ENCODE measurements at regions of chr19 and their contacts with region 1.

Region 1: GRCh38 chr19:54576411-54576976 is 2.9 kb downstream of the LILRA2 start:
- DNase-seq: no peak
- CTCF ChIP-seq: no peak

Region 2: DNA sequence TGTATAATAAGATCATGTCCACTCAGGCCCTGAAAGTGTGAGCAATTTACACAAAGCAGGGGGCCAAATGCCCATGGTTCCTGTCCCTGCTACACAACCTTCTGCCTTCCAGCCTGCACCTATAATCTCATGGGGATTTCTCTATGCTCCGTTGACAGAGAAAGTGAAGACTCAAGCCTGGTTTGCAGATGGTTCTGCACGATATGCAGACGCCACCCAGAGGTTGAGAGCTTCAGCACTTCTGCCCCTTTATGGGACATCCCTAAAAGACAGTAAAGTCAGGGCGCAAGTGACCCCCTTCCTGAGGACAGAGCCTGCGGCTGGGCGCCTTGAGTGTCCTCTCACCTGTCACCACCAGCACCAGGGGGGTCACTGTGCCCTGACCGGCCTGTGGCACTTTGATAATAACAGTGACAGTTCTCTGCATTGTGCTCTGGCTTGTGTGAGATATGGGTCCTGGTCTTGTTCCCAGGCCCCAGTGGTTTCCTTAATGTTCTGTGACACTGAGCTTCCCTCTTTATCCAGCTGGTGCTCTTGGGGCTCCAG is 278.7 kb before region 1 on chr19:
- in situ Hi-C with region 1: loop called (anchors 5 kb)
- DNase-seq: peak; percentile 52
- CTCF ChIP-seq: peak; percentile 26

Region 3: DNA sequence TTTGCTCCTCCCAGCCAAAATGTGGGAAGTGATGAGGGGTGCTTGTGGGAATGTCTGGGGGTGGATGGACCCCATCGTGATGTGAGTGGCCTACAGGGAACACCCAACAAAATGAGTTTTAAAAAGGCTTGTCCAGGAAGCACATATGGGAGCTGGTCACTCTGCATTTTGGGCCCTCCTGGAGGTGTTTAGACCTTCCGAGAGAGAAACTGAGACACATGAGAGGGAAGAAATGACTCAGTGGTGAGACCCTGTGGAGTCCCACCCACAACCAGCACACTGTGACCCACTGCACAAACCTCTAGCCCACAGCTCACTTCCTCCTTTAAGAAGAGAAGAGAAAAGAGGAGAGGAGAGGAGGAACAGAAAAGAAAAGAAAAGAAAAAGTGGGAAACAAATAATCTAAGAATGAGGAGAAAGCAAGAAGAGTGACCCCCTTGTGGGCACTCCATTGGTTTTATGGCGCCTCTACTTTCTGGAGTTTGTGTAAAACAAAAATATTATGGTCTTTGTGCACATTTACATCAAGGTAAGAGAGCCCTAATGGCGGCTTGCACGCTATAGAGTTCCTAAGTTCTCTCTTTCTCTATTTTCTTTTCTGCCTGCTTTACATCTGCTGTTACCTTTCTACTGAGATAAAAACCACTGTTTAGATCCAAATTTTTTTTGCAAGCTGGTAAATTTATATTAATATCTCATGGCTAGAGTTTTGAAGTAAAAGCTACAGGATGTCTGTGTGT is 40.5 kb after region 1 on chr19:
- in situ Hi-C with region 1: no loop called
- DNase-seq: peak; percentile 52
- CTCF ChIP-seq: no peak